GM12878 (cell line): ENCODE measurements at regions of chr13 and their contacts with region 1.

Region 1: DNA sequence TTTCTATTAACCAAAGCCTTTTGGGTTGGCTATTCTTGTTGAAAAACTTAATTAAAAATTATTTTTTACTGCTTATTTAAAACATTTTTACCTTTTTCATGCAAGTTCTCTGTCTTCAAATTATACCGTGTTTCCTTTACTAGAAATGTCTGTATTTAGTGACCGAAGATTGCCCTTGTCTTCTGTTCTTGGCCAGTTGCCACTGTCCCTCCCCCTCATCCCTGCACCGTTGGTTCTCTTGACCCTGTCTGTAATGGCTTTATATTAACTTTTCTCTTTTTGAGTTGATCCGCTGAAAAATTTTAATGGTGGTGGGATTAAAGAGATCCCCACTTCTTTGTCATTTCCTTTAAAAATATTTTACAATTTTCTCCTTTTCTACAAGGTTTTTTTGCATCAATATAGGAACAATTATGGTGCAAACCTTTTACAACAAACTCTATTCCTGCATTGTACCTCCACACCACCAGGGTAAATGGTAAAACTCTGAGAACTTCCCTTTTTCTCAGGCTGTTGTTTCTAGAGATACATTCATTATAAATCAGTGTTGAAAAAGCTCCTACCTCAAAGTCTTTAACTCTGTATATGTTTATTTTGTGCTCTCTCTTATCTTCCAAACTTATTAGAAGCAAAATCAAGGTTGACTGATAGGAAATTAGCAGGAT is 12.9 kb upstream of the RNF113B start:
- DNase-seq: no peak
- ATAC-seq: peak; percentile 28; the same call in 1 of the 3 replicates
- H3K4me3 ChIP-seq: no peak overlapping the region
- H3K27ac ChIP-seq: no peak overlapping the region
- H3K4me1 ChIP-seq: no peaks in the 10 kb centered on the region
- H3K27me3 ChIP-seq: no peaks in the 10 kb centered on the region
- CTCF ChIP-seq: no peak
- EP300 ChIP-seq: no peak
- POLR2A ChIP-seq: no peak
- RAD21 ChIP-seq: no peak

Region 2: GRCh38 chr13:98068521-98068920 is 121.5 kb before region 1 on chr13:
- CTCF ChIA-PET with region 1: no interaction called
- POLR2A ChIA-PET with region 1: no interaction called
- RAD21 ChIA-PET with region 1: no interaction called
- SMC1A ChIA-PET with region 1: no interaction called
- in situ Hi-C with region 1: no loop called
- intact Hi-C with region 1: no loop called
- DNase-seq: no peak
- ATAC-seq: no peak
- H3K4me3 ChIP-seq: no peak overlapping the region
- H3K27ac ChIP-seq: no peak overlapping the region
- H3K4me1 ChIP-seq: no peaks in the 10 kb centered on the region
- H3K27me3 ChIP-seq: no peaks in the 10 kb centered on the region
- CTCF ChIP-seq: no peak
- EP300 ChIP-seq: no peak
- POLR2A ChIP-seq: no peak
- RAD21 ChIP-seq: no peak

Region 3: DNA sequence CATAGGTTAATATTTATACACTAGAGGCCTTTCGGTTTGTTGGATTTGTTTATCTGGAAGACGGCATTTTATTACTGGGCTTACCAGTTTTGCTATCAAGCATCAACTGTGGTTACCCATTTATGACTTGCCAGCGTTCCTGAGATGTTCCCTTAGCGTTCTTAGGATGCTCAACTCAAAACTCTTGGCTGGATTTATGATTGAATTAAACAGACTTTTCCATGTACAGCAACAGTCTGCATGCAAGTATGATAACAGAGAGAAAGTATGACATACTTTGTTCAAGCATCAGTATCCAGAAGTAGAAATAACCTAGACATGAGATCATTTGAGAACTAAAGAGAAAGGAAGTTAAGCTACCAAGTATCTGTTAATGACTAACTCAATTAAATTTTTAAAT is 17.0 kb after region 1 on chr13:
- CTCF ChIA-PET with region 1: interaction called, 3 read pairs
- POLR2A ChIA-PET with region 1: interaction called, 6 read pairs
- RAD21 ChIA-PET with region 1: interaction called, 3 read pairs
- SMC1A ChIA-PET with region 1: interaction called, 18 read pairs
- in situ Hi-C with region 1: no loop called
- intact Hi-C with region 1: no loop called
- DNase-seq: no peak
- ATAC-seq: no peak
- H3K4me3 ChIP-seq: no peak overlapping the region
- H3K27ac ChIP-seq: no peak overlapping the region
- H3K4me1 ChIP-seq: no peaks in the 10 kb centered on the region
- H3K27me3 ChIP-seq: no peaks in the 10 kb centered on the region
- CTCF ChIP-seq: no peak
- EP300 ChIP-seq: no peak
- POLR2A ChIP-seq: no peak
- RAD21 ChIP-seq: no peak